Pancreas (tissue), 10 donors: ENCODE measurements at regions of chr18 and their contacts with region 1.

Region 1: DNA sequence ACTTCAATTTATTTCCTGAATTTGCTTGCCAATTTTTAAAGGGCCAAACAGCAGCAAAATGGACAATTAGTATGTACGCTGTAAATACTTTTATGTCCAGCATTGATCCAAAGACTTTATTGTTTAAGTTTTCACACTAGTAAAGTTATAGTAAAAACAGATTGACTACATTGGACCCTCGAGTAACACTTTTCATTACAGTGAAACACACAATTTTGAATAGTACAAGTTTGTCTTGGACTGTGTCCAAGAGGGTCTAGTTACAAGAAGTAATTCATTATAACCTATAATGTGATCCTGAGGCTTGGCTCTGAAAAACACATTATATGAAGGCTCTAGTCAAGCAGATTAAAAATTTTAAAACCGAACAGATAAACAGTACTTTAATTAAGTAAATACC is 11.4 kb upstream of the RBBP8 start:
- DNase-seq: no peak
- ATAC-seq: no peak
- H3K4me3 ChIP-seq: no peak overlapping the region
- H3K27ac ChIP-seq: no peak overlapping the region
- H3K4me1 ChIP-seq: peaks cover 6 to 29% (median 21%) of the 10 kb centered on the region in 3 donors
- H3K27me3 ChIP-seq: no peaks in the 10 kb centered on the region
- CTCF ChIP-seq: no peak

Region 2: GRCh38 chr18:22108674-22109073 is 813.1 kb before region 1 on chr18:
- intact Hi-C with region 1: no loop called
- DNase-seq: peak in 2 of 6 donors; percentile 22 to 24
- ATAC-seq: peak in 3 of 4 donors; percentile 54 to 71 (median 59)
- H3K4me3 ChIP-seq: no peak overlapping the region
- H3K27ac ChIP-seq: no peak overlapping the region
- H3K4me1 ChIP-seq: peaks cover 0 to 8% (median 0%) of the 10 kb centered on the region in 3 donors
- H3K27me3 ChIP-seq: no peaks in the 10 kb centered on the region
- CTCF ChIP-seq: peak in 1 of 4 donors; percentile 11

Region 3: DNA sequence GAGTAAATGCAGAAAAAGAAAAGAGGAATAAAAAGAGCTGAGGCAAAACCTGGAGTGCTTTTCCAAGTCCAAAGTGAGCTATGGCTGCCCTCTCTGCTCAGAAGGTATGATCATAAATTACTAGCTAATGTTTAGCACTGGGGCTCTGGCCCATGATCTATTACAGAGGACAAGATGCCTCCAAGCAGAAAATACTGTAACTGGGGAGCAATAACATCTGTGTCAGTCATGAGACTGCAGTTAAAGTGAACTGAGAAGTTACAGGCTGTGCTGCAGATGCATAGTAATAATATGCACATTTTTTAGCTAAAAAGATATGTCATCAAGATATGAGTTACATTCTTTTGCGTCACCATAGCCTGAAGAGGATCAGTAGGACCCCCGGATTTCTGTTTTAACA is 198.0 kb before region 1 on chr18:
- intact Hi-C with region 1: no loop called
- DNase-seq: no peak
- ATAC-seq: no peak
- H3K4me3 ChIP-seq: no peak overlapping the region
- H3K27ac ChIP-seq: no peak overlapping the region
- H3K4me1 ChIP-seq: peaks cover 0 to 7% (median 7%) of the 10 kb centered on the region in 3 donors
- H3K27me3 ChIP-seq: no peaks in the 10 kb centered on the region
- CTCF ChIP-seq: no peak

Region 4: DNA sequence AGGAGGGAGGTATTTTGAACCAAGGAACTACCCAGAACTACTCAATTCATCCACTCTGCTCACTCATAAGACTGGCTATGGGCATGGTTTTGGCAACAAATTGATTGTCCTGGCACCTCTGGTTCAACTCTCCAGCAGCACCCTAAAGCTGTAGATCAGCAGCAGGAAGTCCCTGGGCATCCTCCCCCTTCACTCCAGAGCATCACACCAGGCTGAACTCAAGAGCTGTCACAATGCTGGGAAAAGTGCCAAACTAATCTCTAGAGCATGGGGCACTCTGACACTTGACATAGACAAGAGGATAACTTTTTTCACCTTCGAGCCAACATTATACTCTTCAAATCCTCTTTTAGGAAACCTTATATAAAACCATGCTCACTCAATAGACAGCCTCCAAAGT is 142.8 kb before region 1 on chr18:
- intact Hi-C with region 1: no loop called
- DNase-seq: no peak
- ATAC-seq: no peak
- H3K4me3 ChIP-seq: no peak overlapping the region
- H3K27ac ChIP-seq: no peak overlapping the region
- H3K4me1 ChIP-seq: no peaks in the 10 kb centered on the region
- H3K27me3 ChIP-seq: no peaks in the 10 kb centered on the region
- CTCF ChIP-seq: no peak

Region 5: GRCh38 chr18:22872900-22873551 is 48.7 kb before region 1 on chr18:
- intact Hi-C with region 1: loop called in 1 of 3 experiments (anchors 10 kb)
- DNase-seq: no peak
- ATAC-seq: peak; percentile 74 to 96 (median 93)
- H3K4me3 ChIP-seq: peak overlapping the region in 2 of 4 donors; percentile 6 to 12
- H3K27ac ChIP-seq: peak overlapping the region in 3 of 4 donors; percentile 13 to 79 (median 77)
- H3K4me1 ChIP-seq: peaks cover 6 to 18% (median 17%) of the 10 kb centered on the region in 3 donors
- H3K27me3 ChIP-seq: no peaks in the 10 kb centered on the region
- CTCF ChIP-seq: no peak

Region 6: DNA sequence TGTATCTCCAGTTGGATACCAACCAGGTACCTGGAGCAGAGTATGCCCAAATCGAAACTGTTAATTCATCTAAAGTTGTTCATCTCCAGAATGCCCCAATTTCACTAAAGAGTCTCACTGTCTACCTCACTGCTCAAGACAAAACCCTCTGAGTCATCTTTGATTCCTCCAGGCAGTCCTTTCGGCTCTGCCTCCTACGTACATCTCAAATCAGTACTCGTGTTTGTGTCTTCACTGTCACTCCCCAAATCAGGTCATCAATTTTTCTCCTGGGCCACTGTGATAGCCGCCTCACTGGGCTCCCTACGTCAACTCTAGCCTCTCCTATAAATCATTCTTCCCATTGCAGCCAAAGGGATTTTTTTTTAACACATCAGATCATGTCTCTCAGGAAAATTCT is 1050.6 kb after region 1 on chr18:
- intact Hi-C with region 1: no loop called
- DNase-seq: no peak
- ATAC-seq: no peak
- H3K4me3 ChIP-seq: no peak overlapping the region
- H3K27ac ChIP-seq: no peak overlapping the region
- H3K4me1 ChIP-seq: no peaks in the 10 kb centered on the region
- H3K27me3 ChIP-seq: no peaks in the 10 kb centered on the region
- CTCF ChIP-seq: no peak